H1 (cell line): ENCODE measurements at regions of chr18 and their contacts with region 1.

Region 1: GRCh38 chr18:5868218-5869115 is 26.9 kb downstream of the TMEM200C start:
- DNase-seq: peak in 1 of 2 experiments; percentile 76
- H3K4me3 ChIP-seq: no peak overlapping the region
- H3K27ac ChIP-seq: no peak overlapping the region
- H3K4me1 ChIP-seq: no peaks in the 10 kb centered on the region
- H3K27me3 ChIP-seq: no peaks in the 10 kb centered on the region; a peak in 1 of 7 replicates
- CTCF ChIP-seq: peak; percentile 39 to 84 (median 82)
- EP300 ChIP-seq: no peak
- POLR2A ChIP-seq: no peak
- RAD21 ChIP-seq: peak; percentile 92 to 96

Region 2: GRCh38 chr18:5817816-5818215 is 50.7 kb before region 1 on chr18:
- CTCF ChIA-PET with region 1: no interaction called
- POLR2A ChIA-PET with region 1: no interaction called
- DNase-seq: no peak
- H3K4me3 ChIP-seq: no peak overlapping the region
- H3K27ac ChIP-seq: no peak overlapping the region
- H3K4me1 ChIP-seq: no peaks in the 10 kb centered on the region
- H3K27me3 ChIP-seq: no peaks in the 10 kb centered on the region
- CTCF ChIP-seq: no peak
- EP300 ChIP-seq: no peak
- POLR2A ChIP-seq: no peak
- RAD21 ChIP-seq: no peak

Region 3: DNA sequence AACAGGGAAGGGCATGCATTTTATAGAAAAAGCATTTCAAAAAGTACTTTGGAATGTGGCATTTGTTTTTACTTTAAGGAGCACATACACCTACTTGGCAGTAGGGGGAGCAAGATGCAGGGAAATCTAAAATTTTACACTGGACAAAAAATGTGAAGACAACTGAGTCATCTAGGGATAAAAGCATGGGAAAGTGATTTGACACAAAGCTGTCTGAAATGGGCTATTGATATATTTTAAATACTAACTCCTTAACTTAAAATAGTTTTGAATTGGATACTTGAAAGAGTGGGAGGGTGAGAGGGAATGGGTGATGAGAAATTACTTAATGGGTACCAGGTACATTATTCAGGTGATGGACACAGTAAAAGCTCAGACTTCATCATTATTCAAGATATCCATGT is 11.0 kb after region 1 on chr18:
- CTCF ChIA-PET with region 1: interaction called, 23 read pairs
- POLR2A ChIA-PET with region 1: no interaction called
- DNase-seq: no peak
- H3K4me3 ChIP-seq: no peak overlapping the region
- H3K27ac ChIP-seq: no peak overlapping the region
- H3K4me1 ChIP-seq: no peaks in the 10 kb centered on the region
- H3K27me3 ChIP-seq: no peaks in the 10 kb centered on the region
- CTCF ChIP-seq: peak in 2 of 3 experiments; percentile 42 to 68; a peak in 2 of 4 replicates
- EP300 ChIP-seq: no peak
- POLR2A ChIP-seq: no peak
- RAD21 ChIP-seq: peak; percentile 79 to 85